SK-N-SH (cell line): ENCODE measurements at regions of chr15 and their contacts with region 1.

Region 1: GRCh38 chr15:70466895-70467529 is 296.3 kb downstream of the UACA start:
- DNase-seq: peak; percentile 75
- H3K4me3 ChIP-seq: no peak overlapping the region; a peak in 1 of 4 replicates
- H3K27ac ChIP-seq: no peak overlapping the region; a peak in 1 of 4 replicates
- H3K4me1 ChIP-seq: peaks cover 0 to 37% of the 10 kb centered on the region in 2 experiments; a peak in 1 of 4 replicates
- H3K27me3 ChIP-seq: no peaks in the 10 kb centered on the region
- CTCF ChIP-seq: peak; percentile 76
- EP300 ChIP-seq: no peak
- RAD21 ChIP-seq: peak; percentile 77

Region 2: GRCh38 chr15:69576035-69576526 is 890.9 kb before region 1 on chr15:
- CTCF ChIA-PET with region 1: interaction called, 13 read pairs
- POLR2A ChIA-PET with region 1: no interaction called
- DNase-seq: peak; percentile 84
- H3K4me3 ChIP-seq: no peak overlapping the region
- H3K27ac ChIP-seq: no peak overlapping the region
- H3K4me1 ChIP-seq: peaks cover 0 to 11% of the 10 kb centered on the region in 2 experiments; a peak in 1 of 4 replicates
- H3K27me3 ChIP-seq: peaks cover 8% of the 10 kb centered on the region; the same call in 1 of the 2 replicates
- CTCF ChIP-seq: peak; percentile 73
- EP300 ChIP-seq: no peak
- RAD21 ChIP-seq: peak; percentile 95

Region 3: GRCh38 chr15:70385072-70385535 is 81.9 kb before region 1 on chr15:
- CTCF ChIA-PET with region 1: interaction called, 11 read pairs
- POLR2A ChIA-PET with region 1: no interaction called
- DNase-seq: peak; percentile 69
- H3K4me3 ChIP-seq: no peak overlapping the region
- H3K27ac ChIP-seq: peak overlapping the region in 1 of 2 experiments; percentile 99; a peak in 2 of 4 replicates
- H3K4me1 ChIP-seq: peaks cover 0 to 43% of the 10 kb centered on the region in 2 experiments; a peak in 2 of 4 replicates
- H3K27me3 ChIP-seq: no peaks in the 10 kb centered on the region
- CTCF ChIP-seq: no peak
- EP300 ChIP-seq: peak in 1 of 2 experiments; percentile 87; a peak in 2 of 4 replicates
- RAD21 ChIP-seq: no peak; the same call in none of the 2 replicates

Region 4: DNA sequence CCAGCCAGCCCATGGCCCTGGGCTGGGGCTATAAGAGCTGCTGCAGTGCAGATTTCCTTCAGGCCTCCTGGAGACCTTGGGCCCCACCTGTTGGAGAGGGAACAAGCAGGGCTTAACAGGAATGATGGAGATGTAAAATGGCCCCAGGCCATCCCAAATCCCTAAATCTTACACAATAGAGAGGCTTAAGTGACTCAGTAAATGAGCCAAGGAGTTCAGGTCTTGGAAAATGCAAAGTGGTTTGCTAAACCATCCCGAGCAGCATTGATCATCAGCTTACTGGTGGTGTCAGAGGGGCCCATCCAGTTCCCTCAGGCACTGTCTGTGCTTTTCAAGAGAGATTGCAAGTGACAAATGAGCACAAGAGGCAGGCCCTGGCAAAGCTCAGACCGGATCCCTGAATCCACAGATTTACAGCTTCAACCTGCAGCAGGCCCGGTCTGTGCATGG is 29.1 kb before region 1 on chr15:
- CTCF ChIA-PET with region 1: interaction called, 32 read pairs
- POLR2A ChIA-PET with region 1: no interaction called
- DNase-seq: peak; percentile 65
- H3K4me3 ChIP-seq: no peak overlapping the region
- H3K27ac ChIP-seq: no peak overlapping the region; a peak in 1 of 4 replicates
- H3K4me1 ChIP-seq: peaks cover 0 to 44% of the 10 kb centered on the region in 2 experiments; a peak in 2 of 4 replicates
- H3K27me3 ChIP-seq: peaks cover 4% of the 10 kb centered on the region; the same call in 1 of the 2 replicates
- CTCF ChIP-seq: no peak
- EP300 ChIP-seq: peak in 1 of 2 experiments; percentile 32; a peak in 1 of 4 replicates
- RAD21 ChIP-seq: no peak

Region 5: DNA sequence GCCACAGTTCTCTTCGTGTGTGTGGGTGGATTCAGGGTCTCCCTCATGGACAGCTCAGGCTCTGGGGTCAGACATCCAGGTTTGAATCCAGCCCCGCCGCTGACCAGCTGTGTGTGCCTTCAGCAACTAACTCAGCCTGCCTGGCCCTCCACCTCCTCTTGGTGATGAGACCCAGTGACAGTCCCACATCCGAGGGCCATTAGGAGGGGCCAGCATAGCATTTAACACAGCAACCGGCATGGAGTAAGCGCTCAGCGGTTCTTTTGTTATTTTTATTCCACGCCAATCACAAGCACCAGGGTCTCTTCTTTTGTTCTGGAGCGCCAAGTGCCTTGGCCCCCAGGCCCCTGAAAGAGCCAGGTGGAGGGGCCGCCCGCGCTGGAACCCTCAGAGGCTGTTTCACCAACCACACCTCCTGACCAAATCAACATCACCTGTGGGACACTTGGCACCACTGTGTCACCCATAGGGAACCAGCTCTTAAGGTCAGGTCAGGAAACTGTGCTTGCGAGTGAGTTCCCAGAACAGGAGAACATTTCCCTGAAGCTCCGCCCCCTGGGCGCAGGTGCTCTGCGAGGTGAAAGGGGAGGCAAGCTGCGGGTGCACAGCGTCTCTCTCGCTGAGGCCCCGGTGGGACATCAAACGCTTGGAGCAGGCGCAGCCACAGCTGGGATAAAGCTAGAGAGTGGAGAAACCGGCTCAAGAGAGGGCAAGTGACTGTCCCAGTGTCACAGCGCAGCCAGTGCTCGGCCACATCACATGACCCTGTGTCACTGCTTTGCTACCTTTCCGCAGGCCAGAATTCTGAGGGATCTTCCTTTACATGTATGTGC is 15.0 kb before region 1 on chr15:
- CTCF ChIA-PET with region 1: interaction called, 18 read pairs
- POLR2A ChIA-PET with region 1: no interaction called
- DNase-seq: no peak
- H3K4me3 ChIP-seq: no peak overlapping the region
- H3K27ac ChIP-seq: no peak overlapping the region
- H3K4me1 ChIP-seq: peaks cover 0 to 17% of the 10 kb centered on the region in 2 experiments; a peak in 1 of 4 replicates
- H3K27me3 ChIP-seq: no peaks in the 10 kb centered on the region
- CTCF ChIP-seq: no peak
- EP300 ChIP-seq: no peak
- RAD21 ChIP-seq: no peak

Region 6: DNA sequence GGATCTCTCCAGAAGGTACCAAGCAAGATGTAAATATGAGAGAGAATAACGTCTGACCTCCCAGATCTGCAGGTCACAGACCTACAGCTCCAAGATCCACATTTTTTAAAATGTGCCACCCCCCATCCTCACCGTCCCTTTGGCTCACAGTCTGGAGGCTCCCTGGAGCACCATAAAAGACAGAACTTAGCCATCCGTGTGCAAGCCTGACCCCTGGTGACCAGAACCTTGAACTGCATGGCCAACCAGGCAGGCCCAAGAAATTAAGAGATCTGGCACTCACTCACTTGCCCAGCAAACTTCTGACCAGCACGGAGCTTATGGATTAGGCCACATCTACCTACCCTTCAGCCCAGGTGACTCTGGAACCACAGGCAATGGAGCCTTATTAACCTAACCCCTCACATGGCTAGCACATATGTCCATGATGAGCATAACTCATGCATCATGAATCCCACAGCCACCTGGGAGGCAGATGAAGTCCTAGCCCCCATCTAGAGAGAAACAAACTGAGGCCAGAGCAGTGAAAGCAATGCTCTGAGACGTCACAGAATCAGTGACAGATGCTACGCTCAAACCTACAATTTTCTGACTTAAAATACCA is 21.1 kb after region 1 on chr15:
- CTCF ChIA-PET with region 1: interaction called, 55 read pairs
- POLR2A ChIA-PET with region 1: no interaction called
- DNase-seq: peak; percentile 84
- H3K4me3 ChIP-seq: no peak overlapping the region; a peak in 1 of 4 replicates
- H3K27ac ChIP-seq: peak overlapping the region in 1 of 2 experiments; percentile 39; a peak in 1 of 4 replicates
- H3K4me1 ChIP-seq: peaks cover 15 to 24% of the 10 kb centered on the region in 2 experiments; a peak in 3 of 4 replicates
- H3K27me3 ChIP-seq: no peaks in the 10 kb centered on the region
- CTCF ChIP-seq: peak; percentile 95
- EP300 ChIP-seq: no peak; a peak in 1 of 4 replicates
- RAD21 ChIP-seq: peak; percentile 97

Region 7: DNA sequence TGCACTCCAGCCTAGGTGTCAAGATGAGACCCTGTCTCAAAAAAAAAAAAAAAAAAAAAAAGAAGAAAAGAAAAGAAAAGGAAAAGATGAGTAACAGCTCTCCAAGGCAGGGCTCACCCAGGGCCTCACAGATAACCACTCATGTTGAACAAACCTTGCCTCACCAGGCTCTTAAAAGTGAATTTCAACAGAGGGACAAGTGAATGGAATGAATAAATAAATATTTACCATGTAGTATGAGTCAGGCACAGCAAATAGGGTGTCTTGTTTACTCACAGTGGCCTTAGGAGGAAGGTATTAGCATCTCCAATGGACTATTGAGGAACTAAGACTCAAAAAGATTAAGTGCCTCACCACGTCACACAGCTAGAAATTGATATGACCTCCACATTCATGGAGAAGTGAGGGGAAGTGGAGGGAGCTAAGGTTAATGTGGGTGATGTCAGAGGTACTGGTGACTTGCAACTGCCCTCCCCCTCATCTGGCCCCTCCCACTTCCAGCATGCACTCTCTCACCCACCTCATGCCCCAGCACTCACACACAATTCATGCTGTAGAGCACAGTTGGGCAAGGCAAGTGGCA is 40.8 kb after region 1 on chr15:
- CTCF ChIA-PET with region 1: no interaction called
- POLR2A ChIA-PET with region 1: no interaction called
- DNase-seq: no peak
- H3K4me3 ChIP-seq: no peak overlapping the region
- H3K27ac ChIP-seq: peak overlapping the region in 1 of 2 experiments; percentile 74; a peak in 3 of 4 replicates
- H3K4me1 ChIP-seq: peaks cover 34 to 46% of the 10 kb centered on the region in 2 experiments; a peak in 3 of 4 replicates
- H3K27me3 ChIP-seq: no peaks in the 10 kb centered on the region
- CTCF ChIP-seq: no peak
- EP300 ChIP-seq: no peak
- RAD21 ChIP-seq: no peak

Region 8: DNA sequence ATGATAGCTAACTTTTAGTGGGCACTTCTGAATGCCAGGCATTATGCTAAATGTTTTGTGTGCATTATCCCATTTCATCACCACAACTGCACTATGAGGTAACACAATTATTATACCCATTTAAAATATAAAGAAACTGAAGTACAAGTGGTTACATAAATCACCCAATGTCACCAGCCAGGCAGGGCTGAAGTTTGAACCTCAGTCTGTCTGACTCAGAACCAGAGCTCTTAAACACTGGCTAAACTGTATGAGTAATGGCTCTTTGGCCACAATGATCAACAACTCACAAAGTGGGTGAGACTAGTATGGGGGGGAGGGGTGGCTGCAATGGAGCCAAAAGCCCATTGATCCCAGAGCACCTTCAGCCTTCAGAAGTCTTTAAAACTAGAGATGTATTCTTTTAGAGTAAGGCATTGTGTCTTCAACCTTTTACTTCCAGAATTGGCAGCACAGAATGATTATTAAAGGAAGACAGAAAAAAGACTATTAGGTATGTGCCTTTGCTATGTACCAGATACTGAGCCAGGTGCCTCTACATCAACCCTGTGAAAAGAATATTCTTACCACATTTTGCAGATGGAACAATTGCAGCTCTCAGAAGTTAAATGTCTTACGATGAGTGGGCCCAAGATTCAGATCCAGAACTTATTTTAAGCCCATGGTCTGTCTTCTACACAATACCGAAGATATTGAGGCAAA is 129.5 kb after region 1 on chr15:
- CTCF ChIA-PET with region 1: no interaction called
- POLR2A ChIA-PET with region 1: no interaction called
- DNase-seq: no peak
- H3K4me3 ChIP-seq: no peak overlapping the region
- H3K27ac ChIP-seq: no peak overlapping the region
- H3K4me1 ChIP-seq: no peaks in the 10 kb centered on the region; a peak in 1 of 4 replicates
- H3K27me3 ChIP-seq: no peaks in the 10 kb centered on the region
- CTCF ChIP-seq: no peak
- EP300 ChIP-seq: peak in 1 of 2 experiments; percentile 64; a peak in 2 of 4 replicates
- RAD21 ChIP-seq: no peak

Region 9: GRCh38 chr15:70617076-70617910 is 150.3 kb after region 1 on chr15:
- CTCF ChIA-PET with region 1: no interaction called
- POLR2A ChIA-PET with region 1: no interaction called
- DNase-seq: no peak
- H3K4me3 ChIP-seq: no peak overlapping the region
- H3K27ac ChIP-seq: no peak overlapping the region
- H3K4me1 ChIP-seq: peaks cover 0 to 3% of the 10 kb centered on the region in 2 experiments; a peak in 2 of 4 replicates
- H3K27me3 ChIP-seq: no peaks in the 10 kb centered on the region
- CTCF ChIP-seq: no peak
- EP300 ChIP-seq: no peak
- RAD21 ChIP-seq: no peak